Left cardiac atrium (tissue), 4 donors: ENCODE measurements at regions of chr1 and their contacts with region 1.

Region 1: GRCh38 chr1:30718636-30719405 is 4.6 kb downstream of the MATN1 start:
- DNase-seq: peak; percentile 98
- ATAC-seq: peak; percentile 87 to 89

Region 2: DNA sequence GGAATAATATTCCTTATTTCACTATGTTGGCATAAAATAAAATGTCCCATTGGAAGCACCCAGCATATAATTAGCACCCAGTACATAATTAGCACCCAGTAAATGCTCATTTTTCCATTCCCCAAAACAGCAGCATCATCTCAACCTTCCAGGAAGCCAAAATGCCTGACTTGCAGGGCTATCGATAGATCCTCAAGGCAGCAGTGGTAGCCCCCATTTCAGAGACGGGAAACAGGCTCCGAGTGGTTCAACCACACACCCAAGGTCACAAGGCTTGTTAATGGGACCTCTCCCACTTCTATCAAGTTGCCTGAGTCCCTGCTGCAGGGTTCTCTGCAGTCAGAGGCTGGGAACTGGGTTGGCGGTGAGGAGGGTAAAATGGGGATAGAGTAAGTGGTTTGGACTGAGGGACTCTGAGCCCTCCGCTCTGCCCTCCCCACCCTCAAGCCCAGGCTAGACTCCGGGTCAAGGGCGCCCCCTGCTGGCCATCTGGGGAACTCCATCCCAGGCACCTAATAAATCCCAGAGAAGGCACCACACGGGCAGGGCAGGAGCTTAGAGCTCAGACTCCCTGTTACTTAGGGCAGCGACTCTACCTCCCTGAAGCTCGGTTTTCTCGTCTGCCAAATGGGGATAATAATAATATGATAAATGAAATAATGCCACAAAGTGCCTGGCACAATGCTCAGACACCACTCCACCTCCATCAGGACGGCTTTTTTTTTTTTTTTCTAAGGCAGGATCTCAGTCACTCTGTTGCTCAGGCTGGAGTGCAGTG is 60.7 kb after region 1 on chr1:
- intact Hi-C with region 1: loop called (anchors 1 to 2 kb)
- DNase-seq: peak; percentile 84
- ATAC-seq: peak; percentile 65 to 72